T-cell (primary cell): ENCODE measurements at regions of chr3 and their contacts with region 1.

Region 1: DNA sequence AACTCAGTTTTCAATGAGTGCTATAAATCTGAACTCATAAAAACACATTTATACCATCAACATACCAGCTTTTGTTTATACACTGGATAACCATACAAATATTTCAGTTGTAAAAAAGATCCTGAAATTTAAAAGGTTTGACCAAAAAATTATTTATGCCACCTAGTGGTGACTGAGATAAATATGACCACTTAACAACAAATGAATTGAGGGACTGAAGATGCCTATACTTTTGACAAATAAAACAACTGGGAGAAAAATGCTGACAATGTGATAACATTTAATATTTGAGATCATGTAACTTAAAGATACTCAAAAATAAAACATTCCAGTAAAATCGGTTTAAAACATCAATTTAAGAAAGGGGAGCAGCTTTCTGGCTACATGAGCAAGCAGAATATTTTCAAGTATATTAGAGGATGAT is 30.4 kb downstream of the ATG3 start:
- DNase-seq: peak in 1 of 35 experiments; percentile 60
- ATAC-seq: no peak
- H3K4me3 ChIP-seq: no peak overlapping the region
- H3K4me3 Mint-ChIP-seq: no peak overlapping the region
- H3K27ac ChIP-seq: no peak overlapping the region
- H3K27ac Mint-ChIP-seq: peak overlapping the region; percentile 57 to 75
- H3K4me1 ChIP-seq: no peaks in the 10 kb centered on the region
- H3K4me1 Mint-ChIP-seq: peaks cover 0 to 4% (median 3%) of the 10 kb centered on the region in 3 donors
- H3K27me3 ChIP-seq: no peaks in the 10 kb centered on the region
- H3K27me3 Mint-ChIP-seq: no peaks in the 10 kb centered on the region

Region 2: DNA sequence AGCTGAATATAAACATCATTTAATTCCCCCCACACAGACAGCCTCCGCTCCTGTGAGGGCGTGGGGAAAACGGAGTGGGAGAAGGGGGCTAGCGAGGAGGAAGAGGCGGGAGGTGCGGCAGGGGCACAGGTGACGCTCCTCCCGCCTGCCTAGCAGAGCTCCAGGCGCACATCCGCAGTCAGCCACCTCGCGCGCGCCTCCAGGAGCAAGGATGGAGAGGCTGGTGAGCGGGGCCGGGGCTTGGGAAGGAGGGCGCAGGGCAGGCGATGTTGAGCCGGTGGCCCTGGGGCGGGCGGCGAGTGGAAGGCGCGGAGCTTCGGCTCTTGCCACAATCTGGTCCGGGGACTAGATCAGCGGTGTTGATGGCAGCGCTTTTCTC is 198.4 kb before region 1 on chr3 and contains the start of gene CD200:
- CTCF ChIA-PET with region 1: interaction called in 1 of 2 experiments, 13 read pairs
- POLR2A ChIA-PET with region 1: interaction called, 3 to 10 read pairs
- DNase-seq: peak; percentile 11 to 62 (median 31)
- ATAC-seq: peak; percentile 78 to 82 (median 82)
- H3K4me3 ChIP-seq: peak within 1 kb of the TSS; percentile 66 to 69
- H3K4me3 Mint-ChIP-seq: peak within 1 kb of the TSS; percentile 84 to 91 (median 88)
- H3K27ac ChIP-seq: no peak within 1 kb of the TSS
- H3K27ac Mint-ChIP-seq: peak within 1 kb of the TSS; percentile 51 to 83
- H3K4me1 ChIP-seq: peaks cover 5 to 11% of the 10 kb centered on the region in 2 experiments
- H3K4me1 Mint-ChIP-seq: peaks cover 37 to 42% (median 40%) of the 10 kb centered on the region in 3 donors
- H3K27me3 ChIP-seq: peaks cover 0 to 12% of the 10 kb centered on the region in 2 experiments
- H3K27me3 Mint-ChIP-seq: peaks cover 0 to 2% of the 10 kb centered on the region in 2 donors
- total RNA-seq, gene CD200: 1.3 to 4.6 (median 2.2) TPM